Naive thymus-derived CD4-positive, alpha-beta T cell (primary cell): ENCODE measurements at regions of chrX and their contacts with region 1.

Region 1: GRCh38 chrX:49172280-49172780 is 632 bp downstream of the PLP2 start:
- DNase-seq: peak in 8 of 9 donors; percentile 26 to 70 (median 33)
- ATAC-seq: peak; percentile 79
- H3K4me3 ChIP-seq: peak overlapping the region; percentile 63
- H3K4me3 Mint-ChIP-seq: peak overlapping the region; percentile 78 to 92 (median 87)
- H3K27ac ChIP-seq: peak overlapping the region; percentile 62
- H3K27ac Mint-ChIP-seq: peak overlapping the region; percentile 2 to 85 (median 82)
- H3K4me1 ChIP-seq: peaks cover 6 to 14% of the 10 kb centered on the region in 2 donors
- H3K4me1 Mint-ChIP-seq: peaks cover 9 to 36% (median 26%) of the 10 kb centered on the region in 7 donors
- H3K27me3 ChIP-seq: no peaks in the 10 kb centered on the region
- H3K27me3 Mint-ChIP-seq: no peaks in the 10 kb centered on the region

Region 2: DNA sequence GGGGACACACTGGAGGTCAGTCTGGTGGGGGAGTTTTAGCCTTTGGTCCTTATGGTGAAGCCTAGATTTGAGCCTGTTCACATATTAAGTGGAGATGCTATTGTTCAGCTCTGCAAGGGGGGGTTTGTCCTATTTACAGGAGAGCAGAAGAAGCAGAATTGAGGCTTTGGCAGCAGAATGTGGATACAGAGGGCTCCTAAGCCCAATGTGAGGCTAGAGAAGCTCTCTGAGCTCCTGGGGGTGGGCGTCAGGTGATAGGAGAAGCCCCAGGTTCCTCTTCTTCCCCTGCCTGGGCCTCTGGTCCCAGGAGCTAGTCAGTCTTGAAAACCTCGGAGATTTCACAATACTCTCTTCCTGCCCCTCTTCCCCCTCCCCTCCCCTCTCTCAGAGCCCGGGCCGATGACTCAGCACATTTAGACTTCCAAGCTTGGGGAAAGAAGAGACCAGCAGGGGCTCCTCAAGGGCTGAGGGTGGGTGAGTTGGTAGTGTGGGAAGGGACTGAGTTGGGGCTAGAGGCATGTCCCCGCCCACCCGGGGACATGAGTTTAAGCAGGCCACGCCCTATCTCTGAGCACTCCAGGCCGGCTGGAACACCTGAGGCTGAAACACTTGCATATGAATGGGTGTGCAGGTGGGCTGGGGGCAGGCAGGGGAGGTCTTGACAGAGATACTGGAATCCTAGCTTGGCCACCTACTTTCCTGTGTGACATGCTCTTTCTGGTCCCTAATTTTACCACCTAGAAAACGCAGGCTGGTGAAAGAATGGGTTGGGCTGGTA is 132.5 kb before region 1 on chrX:
- CTCF ChIA-PET with region 1: no interaction called
- POLR2A ChIA-PET with region 1: no interaction called
- intact Hi-C with region 1: no loop called
- DNase-seq: peak in 6 of 9 donors; percentile 4 to 36 (median 12)
- ATAC-seq: no peak
- H3K4me3 ChIP-seq: no peak overlapping the region
- H3K4me3 Mint-ChIP-seq: peak overlapping the region in 7 of 10 donors; percentile 10 to 86 (median 27)
- H3K27ac ChIP-seq: no peak overlapping the region
- H3K27ac Mint-ChIP-seq: peak overlapping the region in 6 of 9 donors; percentile 15 to 80 (median 73)
- H3K4me1 ChIP-seq: peaks cover 5 to 21% of the 10 kb centered on the region in 2 donors
- H3K4me1 Mint-ChIP-seq: peaks cover 18 to 40% (median 31%) of the 10 kb centered on the region in 7 donors
- H3K27me3 ChIP-seq: no peaks in the 10 kb centered on the region
- H3K27me3 Mint-ChIP-seq: no peaks in the 10 kb centered on the region

Region 3: GRCh38 chrX:49155900-49156837 is 16.2 kb before region 1 on chrX:
- CTCF ChIA-PET with region 1: interaction called, 6 read pairs
- POLR2A ChIA-PET with region 1: interaction called, 23 read pairs
- intact Hi-C with region 1: loop called in 1 of 2 experiments (anchors 1 kb)
- DNase-seq: peak; percentile 75 to 87 (median 85)
- ATAC-seq: peak; percentile 97
- H3K4me3 ChIP-seq: peak overlapping the region; percentile 74
- H3K4me3 Mint-ChIP-seq: peak overlapping the region; percentile 93 to 99 (median 97)
- H3K27ac ChIP-seq: peak overlapping the region; percentile 91
- H3K27ac Mint-ChIP-seq: peak overlapping the region; percentile 89 to 99 (median 96)
- H3K4me1 ChIP-seq: peaks cover 0 to 6% of the 10 kb centered on the region in 2 donors
- H3K4me1 Mint-ChIP-seq: peaks cover 7 to 21% (median 13%) of the 10 kb centered on the region in 7 donors
- H3K27me3 ChIP-seq: no peaks in the 10 kb centered on the region
- H3K27me3 Mint-ChIP-seq: peaks cover 0 to 2% (median 0%) of the 10 kb centered on the region in 5 donors

Region 4: DNA sequence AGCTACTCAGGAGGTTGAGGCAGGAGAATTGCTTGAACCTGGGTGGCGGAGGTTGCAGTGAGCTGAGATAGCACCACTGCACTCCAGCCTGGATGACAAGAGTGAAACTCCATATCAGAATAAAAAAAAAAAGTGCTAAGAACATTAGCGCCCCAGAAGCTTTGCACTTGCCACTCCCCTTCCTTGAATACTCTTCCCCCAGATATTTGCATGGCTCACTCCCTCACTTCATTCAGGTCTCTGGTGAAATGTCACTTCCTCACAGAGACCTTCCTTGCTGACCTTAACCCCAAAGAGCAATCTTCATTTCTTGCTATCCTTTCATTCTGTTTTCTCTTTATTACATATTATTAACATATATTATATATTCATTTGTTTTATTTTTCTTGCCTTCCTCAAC is 49.5 kb after region 1 on chrX:
- CTCF ChIA-PET with region 1: no interaction called
- POLR2A ChIA-PET with region 1: no interaction called
- intact Hi-C with region 1: no loop called
- DNase-seq: no peak
- ATAC-seq: no peak
- H3K4me3 ChIP-seq: no peak overlapping the region
- H3K4me3 Mint-ChIP-seq: no peak overlapping the region
- H3K27ac ChIP-seq: no peak overlapping the region
- H3K27ac Mint-ChIP-seq: no peak overlapping the region
- H3K4me1 ChIP-seq: no peaks in the 10 kb centered on the region
- H3K4me1 Mint-ChIP-seq: peaks cover 0 to 4% (median 0%) of the 10 kb centered on the region in 7 donors
- H3K27me3 ChIP-seq: no peaks in the 10 kb centered on the region
- H3K27me3 Mint-ChIP-seq: peaks cover 0 to 10% (median 0%) of the 10 kb centered on the region in 5 donors